GM12878 (cell line): ENCODE measurements at regions of chr12 and their contacts with region 1.

Region 1: GRCh38 chr12:131454418-131455217 is 256.3 kb upstream of the SFSWAP start:
- DNase-seq: no peak
- ATAC-seq: peak; percentile 100
- H3K4me3 ChIP-seq: no peak overlapping the region
- H3K27ac ChIP-seq: no peak overlapping the region
- H3K4me1 ChIP-seq: no peaks in the 10 kb centered on the region
- H3K27me3 ChIP-seq: no peaks in the 10 kb centered on the region
- CTCF ChIP-seq: peak; percentile 44 to 79 (median 70)
- EP300 ChIP-seq: no peak
- POLR2A ChIP-seq: no peak
- RAD21 ChIP-seq: peak; percentile 61

Region 2: GRCh38 chr12:131142891-131143657 is 311.5 kb before region 1 on chr12:
- CTCF ChIA-PET with region 1: no interaction called
- POLR2A ChIA-PET with region 1: no interaction called
- RAD21 ChIA-PET with region 1: no interaction called
- SMC1A ChIA-PET with region 1: interaction called, 3 read pairs
- in situ Hi-C with region 1: no loop called
- intact Hi-C with region 1: loop called (anchors 10 kb)
- DNase-seq: no peak
- ATAC-seq: no peak
- H3K4me3 ChIP-seq: no peak overlapping the region
- H3K27ac ChIP-seq: no peak overlapping the region
- H3K4me1 ChIP-seq: no peaks in the 10 kb centered on the region
- H3K27me3 ChIP-seq: no peaks in the 10 kb centered on the region
- CTCF ChIP-seq: no peak
- EP300 ChIP-seq: no peak
- POLR2A ChIP-seq: no peak
- RAD21 ChIP-seq: no peak